ENCODE measurements at regions of chr17 and their contacts with region 1.

Region 1: DNA sequence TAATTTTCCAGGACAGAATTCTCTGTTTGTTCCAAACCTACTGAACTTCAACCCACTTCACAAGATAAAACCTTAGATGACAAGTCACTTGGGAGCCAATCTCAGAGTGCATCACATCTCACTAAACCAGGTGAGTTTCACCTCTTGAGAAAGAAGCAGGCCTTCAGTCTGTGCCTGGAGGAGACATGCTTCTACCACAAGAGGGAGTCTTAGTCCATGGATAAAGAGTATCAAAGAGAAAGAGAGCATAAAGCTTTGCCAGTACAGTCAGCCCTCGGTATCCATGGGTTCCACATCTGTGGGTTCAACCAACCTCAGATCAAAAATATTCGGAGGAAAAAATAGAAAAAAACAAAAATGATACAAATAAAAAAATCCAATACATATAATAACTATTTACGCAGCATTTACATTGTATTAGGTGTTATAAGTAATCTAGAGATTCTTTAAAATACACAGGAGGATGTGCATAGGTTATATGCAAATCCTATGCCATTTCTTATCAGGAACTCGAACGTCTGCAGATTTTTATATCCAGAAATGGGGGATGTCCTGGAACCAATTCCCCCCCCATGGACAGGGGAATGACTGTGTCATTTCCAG is 37.7 kb downstream of the DUSP14 start:
- DNase-seq: peak; percentile 56
- H3K4me3 ChIP-seq: no peak overlapping the region
- H3K27ac ChIP-seq: no peak overlapping the region
- H3K4me1 ChIP-seq: no peaks in the 10 kb centered on the region
- H3K27me3 ChIP-seq: no peaks in the 10 kb centered on the region
- CTCF ChIP-seq: peak; percentile 57 to 66
- POLR2A ChIP-seq: no peak

Region 2: GRCh38 chr17:37447641-37448040 is 79.7 kb before region 1 on chr17:
- CTCF ChIA-PET with region 1: no interaction called
- POLR2A ChIA-PET with region 1: no interaction called
- dilution Hi-C with region 1: no loop called
- intact Hi-C with region 1: no loop called
- DNase-seq: peak; percentile 29
- H3K4me3 ChIP-seq: no peak overlapping the region
- H3K27ac ChIP-seq: no peak overlapping the region
- H3K4me1 ChIP-seq: peaks cover 7% of the 10 kb centered on the region
- H3K27me3 ChIP-seq: no peaks in the 10 kb centered on the region
- CTCF ChIP-seq: no peak
- POLR2A ChIP-seq: no peak

Region 3: DNA sequence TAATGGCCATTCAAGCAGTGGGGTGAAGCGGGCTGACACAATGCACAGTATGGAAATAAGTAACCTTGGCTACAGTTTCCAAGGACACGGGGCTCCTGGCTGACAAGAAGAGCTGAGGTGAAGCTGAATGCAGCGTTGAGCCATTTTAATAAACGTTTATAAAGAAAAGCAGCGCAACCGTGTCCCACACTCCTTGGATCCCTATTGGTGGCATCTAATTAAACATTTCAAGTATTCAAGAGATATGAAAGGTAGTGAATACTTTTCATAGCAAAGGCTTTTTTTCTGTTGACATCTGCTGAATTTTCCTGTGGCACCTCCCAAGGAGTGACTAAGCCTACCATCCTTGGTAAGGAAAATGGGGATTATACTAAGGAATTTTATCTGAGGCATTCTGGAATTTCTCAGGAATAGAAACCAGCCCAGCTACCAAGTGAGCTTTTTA is 11.2 kb before region 1 on chr17:
- CTCF ChIA-PET with region 1: interaction called, 16 read pairs
- POLR2A ChIA-PET with region 1: no interaction called
- dilution Hi-C with region 1: no loop called
- intact Hi-C with region 1: no loop called
- DNase-seq: no peak
- H3K4me3 ChIP-seq: no peak overlapping the region
- H3K27ac ChIP-seq: no peak overlapping the region
- H3K4me1 ChIP-seq: no peaks in the 10 kb centered on the region
- H3K27me3 ChIP-seq: no peaks in the 10 kb centered on the region
- CTCF ChIP-seq: no peak
- POLR2A ChIP-seq: no peak

Region 4: GRCh38 chr17:37555386-37555785 is 28.0 kb after region 1 on chr17:
- CTCF ChIA-PET with region 1: interaction called, 6 read pairs
- POLR2A ChIA-PET with region 1: no interaction called
- dilution Hi-C with region 1: no loop called
- intact Hi-C with region 1: loop called (anchors 2 kb)
- DNase-seq: no peak
- H3K4me3 ChIP-seq: no peak overlapping the region
- H3K27ac ChIP-seq: no peak overlapping the region
- H3K4me1 ChIP-seq: no peaks in the 10 kb centered on the region
- H3K27me3 ChIP-seq: no peaks in the 10 kb centered on the region
- CTCF ChIP-seq: no peak
- POLR2A ChIP-seq: no peak

Region 5: DNA sequence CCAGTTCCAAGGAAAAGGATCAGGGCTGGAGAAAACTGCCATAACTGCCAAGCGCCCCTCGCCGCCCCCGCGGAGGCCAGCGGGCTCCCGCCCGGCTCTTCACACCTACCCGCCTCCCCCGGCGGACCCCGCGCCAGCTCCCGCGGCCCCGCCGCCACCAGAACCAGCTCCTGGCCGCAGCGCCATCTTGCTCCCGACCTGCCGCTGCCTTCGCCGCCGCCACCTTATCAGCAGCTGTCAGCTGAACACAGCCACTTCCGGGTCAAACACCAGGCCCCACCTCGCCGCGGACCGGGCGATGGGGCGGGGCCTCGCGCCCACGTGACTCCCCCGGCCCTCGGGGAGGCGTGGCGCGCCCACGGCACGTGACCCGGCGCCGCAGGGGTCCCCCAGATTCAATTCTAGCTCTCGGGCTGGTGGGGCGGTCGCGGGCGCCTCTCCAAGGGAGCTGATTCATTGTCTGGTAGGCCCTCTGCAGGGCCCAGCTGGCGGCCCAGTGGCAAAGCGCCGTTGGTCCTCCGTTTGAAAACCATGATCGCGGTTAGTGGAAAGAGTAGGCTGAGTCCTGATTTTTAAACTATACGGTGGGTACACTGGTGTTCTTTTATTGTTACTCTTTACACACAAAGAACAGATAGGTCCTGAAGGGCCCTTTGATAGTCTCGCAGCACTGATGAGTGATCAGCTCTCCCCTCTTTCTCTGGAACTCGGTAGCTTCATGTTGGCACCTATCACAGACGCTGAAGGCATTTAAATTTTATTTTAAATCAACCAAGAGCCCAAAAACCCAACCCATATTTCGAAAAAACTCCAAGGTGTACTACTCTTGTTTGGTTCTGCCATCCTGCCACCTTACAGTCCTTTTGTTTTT is 82.1 kb after region 1 on chr17 and contains the start of gene SYNRG:
- CTCF ChIA-PET with region 1: interaction called, 16 read pairs
- POLR2A ChIA-PET with region 1: no interaction called
- dilution Hi-C with region 1: no loop called
- intact Hi-C with region 1: loop called (anchors 1 kb)
- DNase-seq: peak; percentile 98
- H3K4me3 ChIP-seq: peak within 1 kb of the TSS; percentile 79 to 97 (median 97)
- H3K27ac ChIP-seq: peak within 1 kb of the TSS; percentile 82
- H3K4me1 ChIP-seq: peaks cover 30% of the 10 kb centered on the region
- H3K27me3 ChIP-seq: no peaks in the 10 kb centered on the region
- CTCF ChIP-seq: peak; percentile 12 to 47
- POLR2A ChIP-seq: peak; percentile 92
- total RNA-seq, gene SYNRG: 42.2 and 43.3 TPM in 2 replicates

Region 6: GRCh38 chr17:39393736-39394135 is 1866.4 kb after region 1 on chr17:
- CTCF ChIA-PET with region 1: no interaction called
- POLR2A ChIA-PET with region 1: no interaction called
- dilution Hi-C with region 1: no loop called
- intact Hi-C with region 1: loop called (anchors 10 kb)
- DNase-seq: peak; percentile 11
- H3K4me3 ChIP-seq: no peak overlapping the region
- H3K27ac ChIP-seq: no peak overlapping the region
- H3K4me1 ChIP-seq: no peaks in the 10 kb centered on the region
- H3K27me3 ChIP-seq: no peaks in the 10 kb centered on the region
- CTCF ChIP-seq: no peak
- POLR2A ChIP-seq: no peak